Mammary epithelial cell (primary cell): ENCODE measurements at regions of chr20 and their contacts with region 1.

Region 1: DNA sequence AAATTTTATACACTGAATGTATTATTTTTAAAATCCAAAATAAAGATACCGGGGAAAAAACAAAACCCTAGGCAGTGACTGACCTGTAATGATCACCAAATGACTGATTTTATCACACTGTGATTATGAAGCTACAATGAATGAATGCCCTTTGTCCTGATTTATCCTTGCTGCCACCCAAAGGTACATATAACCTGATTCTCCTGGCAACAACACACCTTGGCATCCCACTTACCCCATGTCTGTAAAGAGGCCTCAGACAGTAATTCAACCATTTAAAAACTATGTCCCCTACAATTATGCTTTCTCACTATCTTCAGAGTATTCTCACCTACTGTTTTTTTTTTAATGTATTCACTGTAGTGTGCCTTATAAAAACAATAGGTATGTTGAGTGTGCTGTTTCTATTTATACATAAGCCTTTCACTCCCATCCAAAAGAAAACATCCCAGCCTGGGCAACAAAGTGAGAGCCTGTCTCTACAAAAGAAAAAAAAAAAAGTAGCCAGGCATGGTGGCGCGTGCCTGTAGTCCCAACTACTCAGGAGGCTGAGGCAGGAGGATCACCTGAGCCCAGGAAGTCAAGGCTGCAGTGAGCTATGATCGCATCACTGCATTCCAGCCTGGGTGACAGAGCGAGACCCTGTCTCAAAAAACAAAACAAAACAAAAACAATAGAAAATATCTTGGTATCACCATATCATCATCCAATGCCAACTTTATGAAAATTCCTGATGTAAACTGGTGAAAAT is 21.7 kb downstream of the B4GALT5 start:
- DNase-seq: no peak
- H3K4me3 ChIP-seq: no peak overlapping the region
- H3K27ac ChIP-seq: no peak overlapping the region
- H3K4me1 ChIP-seq: peaks cover 54% of the 10 kb centered on the region
- H3K27me3 ChIP-seq: no peaks in the 10 kb centered on the region
- CTCF ChIP-seq: no peak

Region 2: GRCh38 chr20:49659056-49659455 is 32.9 kb before region 1 on chr20:
- CTCF ChIA-PET with region 1: interaction called, 10 read pairs
- dilution Hi-C with region 1: no loop called
- in situ Hi-C with region 1: no loop called
- intact Hi-C with region 1: no loop called
- DNase-seq: no peak
- H3K4me3 ChIP-seq: no peak overlapping the region
- H3K27ac ChIP-seq: no peak overlapping the region
- H3K4me1 ChIP-seq: peaks cover 7% of the 10 kb centered on the region
- H3K27me3 ChIP-seq: no peaks in the 10 kb centered on the region
- CTCF ChIP-seq: no peak

Region 3: DNA sequence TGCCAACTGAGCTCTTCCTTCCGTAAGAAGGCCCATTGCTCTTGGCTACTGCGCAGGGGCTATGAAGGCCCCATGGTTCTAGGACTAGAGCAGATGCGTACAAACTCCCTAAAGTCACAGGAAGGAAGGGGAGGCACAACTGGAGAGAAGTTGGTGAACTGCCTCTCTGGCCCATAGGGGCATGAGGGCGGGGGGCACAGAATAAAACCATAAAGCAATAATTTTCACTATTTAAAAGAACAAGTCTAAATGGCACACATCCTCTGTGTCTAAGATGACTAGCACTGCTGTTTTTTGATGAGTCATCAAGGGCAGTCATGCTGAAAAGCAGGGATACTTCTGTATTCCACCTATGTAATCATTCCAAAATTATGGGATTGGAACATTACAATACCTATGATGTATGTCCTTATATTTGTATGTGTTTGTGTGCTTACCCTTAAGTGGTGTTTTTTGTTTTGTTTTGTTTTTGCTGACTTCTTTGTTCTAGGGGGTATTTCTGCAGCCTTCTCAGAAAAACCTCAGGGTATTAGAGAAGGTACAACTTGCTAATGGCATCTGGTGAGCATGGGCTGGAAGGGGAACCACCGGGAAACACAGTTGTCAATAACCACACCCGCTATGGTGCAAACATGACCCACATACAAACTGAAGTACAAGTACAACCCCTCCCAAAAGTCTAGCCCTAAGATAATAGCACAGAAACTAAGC is 15.3 kb before region 1 on chr20:
- CTCF ChIA-PET with region 1: no interaction called
- dilution Hi-C with region 1: no loop called
- in situ Hi-C with region 1: no loop called
- intact Hi-C with region 1: loop called (anchors 2 kb)
- DNase-seq: peak; percentile 61
- H3K4me3 ChIP-seq: no peak overlapping the region
- H3K27ac ChIP-seq: peak overlapping the region; percentile 13
- H3K4me1 ChIP-seq: peaks cover 46% of the 10 kb centered on the region
- H3K27me3 ChIP-seq: no peaks in the 10 kb centered on the region
- CTCF ChIP-seq: no peak

Region 4: GRCh38 chr20:49706630-49707091 is 14.7 kb after region 1 on chr20:
- CTCF ChIA-PET with region 1: no interaction called
- dilution Hi-C with region 1: no loop called
- in situ Hi-C with region 1: no loop called
- intact Hi-C with region 1: no loop called
- DNase-seq: no peak
- H3K4me3 ChIP-seq: no peak overlapping the region
- H3K27ac ChIP-seq: no peak overlapping the region
- H3K4me1 ChIP-seq: peaks cover 6% of the 10 kb centered on the region
- H3K27me3 ChIP-seq: no peaks in the 10 kb centered on the region
- CTCF ChIP-seq: no peak